ENCODE measurements at regions of chr14 and their contacts with region 1.

Region 1: DNA sequence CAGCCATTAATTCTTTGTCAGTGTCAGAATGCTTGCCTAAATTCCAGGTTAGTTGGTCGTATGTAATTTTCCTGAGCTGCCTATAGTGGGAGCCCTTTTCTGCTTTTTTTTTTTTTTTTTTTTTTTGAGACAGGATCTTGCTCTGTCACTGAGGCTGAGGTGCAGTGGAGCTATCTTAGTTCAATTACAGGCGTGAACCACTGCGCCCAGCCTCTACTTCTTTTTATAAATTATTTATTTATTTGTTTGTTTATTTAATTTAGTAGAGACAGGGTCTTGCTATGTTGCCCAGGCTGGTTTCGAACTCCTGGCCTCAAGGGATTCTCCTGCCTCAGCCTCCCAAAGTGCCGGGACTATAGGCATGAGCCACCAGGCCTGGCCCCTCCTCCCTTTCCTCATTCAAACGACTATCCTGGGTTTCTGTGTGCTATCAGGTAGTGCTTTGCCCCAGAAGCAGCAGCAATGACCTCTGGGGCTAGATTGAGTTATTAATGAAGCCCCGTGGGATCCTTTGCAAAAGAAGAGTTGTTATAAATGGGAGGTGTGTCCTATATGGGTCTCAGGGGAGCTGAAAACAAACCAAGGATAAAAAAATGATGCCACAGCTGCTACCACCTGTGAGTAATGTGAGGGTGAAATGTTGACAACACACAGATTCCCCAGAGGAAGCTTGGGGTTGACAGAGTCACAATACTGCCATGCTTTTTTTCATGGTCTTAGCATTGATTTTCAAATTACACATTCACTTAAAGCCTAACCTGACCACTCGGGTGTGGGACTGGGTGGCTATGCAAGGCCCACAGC is 34.6 kb upstream of the NFKBIA start:
- ATAC-seq: peak in 6 of 8 experiments; percentile 43 to 94 (median 71)
- H3K4me3 ChIP-seq: no peak overlapping the region
- H3K27ac ChIP-seq: no peak overlapping the region
- H3K4me1 ChIP-seq: no peaks in the 10 kb centered on the region

Region 2: DNA sequence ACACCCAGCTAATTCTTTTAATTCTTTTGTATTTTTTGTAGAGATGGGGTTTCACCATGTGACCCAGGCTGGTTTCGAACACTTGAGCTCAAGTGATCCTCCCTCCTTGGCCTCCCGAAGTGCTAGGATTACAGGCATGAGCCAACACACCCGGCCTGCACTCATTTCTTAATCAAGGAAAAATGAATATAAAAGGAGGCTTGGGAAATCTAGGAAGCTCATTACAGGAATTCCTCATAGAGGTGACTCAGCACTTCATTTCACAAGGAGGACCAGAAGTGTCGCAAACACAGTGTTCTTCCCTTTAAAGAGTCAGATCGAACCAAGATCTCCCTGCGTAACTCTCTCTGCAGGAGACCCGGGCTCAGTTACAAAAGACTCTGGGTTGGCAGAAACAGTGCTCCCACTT is 64.8 kb before region 1 on chr14:
- in situ Hi-C with region 1: no loop called
- ATAC-seq: peak in 4 of 8 experiments; percentile 33 to 75 (median 55)
- H3K4me3 ChIP-seq: no peak overlapping the region
- H3K27ac ChIP-seq: no peak overlapping the region
- H3K4me1 ChIP-seq: no peaks in the 10 kb centered on the region

Region 3: DNA sequence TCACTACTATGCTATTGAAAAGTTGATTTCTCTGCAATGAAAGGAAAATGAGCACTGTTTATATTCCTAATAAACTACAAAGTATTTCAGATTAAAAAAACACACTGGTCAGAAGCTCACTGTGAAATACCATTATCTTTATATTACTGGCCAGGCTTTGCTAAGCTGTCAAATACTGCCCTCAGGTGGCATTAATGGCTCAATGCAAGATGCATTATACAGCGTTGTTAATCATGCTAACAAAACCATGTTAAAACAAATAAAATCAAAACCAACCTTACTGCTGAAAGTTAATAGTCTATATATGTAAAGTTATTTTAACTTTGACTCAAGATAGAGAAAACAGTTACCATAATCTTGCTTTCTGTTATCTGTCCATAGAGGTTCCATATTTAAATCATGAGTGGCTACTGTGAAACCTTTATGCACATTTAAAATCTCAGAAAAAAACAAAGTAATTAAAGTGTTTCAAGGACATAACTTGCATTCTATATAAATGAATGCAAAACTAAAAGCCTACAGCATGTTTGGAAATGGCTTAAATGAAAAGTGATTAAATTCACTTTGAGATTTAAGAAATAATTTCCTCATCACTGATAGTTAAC is 248.3 kb after region 1 on chr14:
- in situ Hi-C with region 1: loop called in 1 of 9 experiments (anchors 25 kb)
- ATAC-seq: peak in 4 of 8 experiments; percentile 46 to 86 (median 76)
- H3K4me3 ChIP-seq: no peak overlapping the region
- H3K27ac ChIP-seq: no peak overlapping the region
- H3K4me1 ChIP-seq: no peaks in the 10 kb centered on the region

Region 4: DNA sequence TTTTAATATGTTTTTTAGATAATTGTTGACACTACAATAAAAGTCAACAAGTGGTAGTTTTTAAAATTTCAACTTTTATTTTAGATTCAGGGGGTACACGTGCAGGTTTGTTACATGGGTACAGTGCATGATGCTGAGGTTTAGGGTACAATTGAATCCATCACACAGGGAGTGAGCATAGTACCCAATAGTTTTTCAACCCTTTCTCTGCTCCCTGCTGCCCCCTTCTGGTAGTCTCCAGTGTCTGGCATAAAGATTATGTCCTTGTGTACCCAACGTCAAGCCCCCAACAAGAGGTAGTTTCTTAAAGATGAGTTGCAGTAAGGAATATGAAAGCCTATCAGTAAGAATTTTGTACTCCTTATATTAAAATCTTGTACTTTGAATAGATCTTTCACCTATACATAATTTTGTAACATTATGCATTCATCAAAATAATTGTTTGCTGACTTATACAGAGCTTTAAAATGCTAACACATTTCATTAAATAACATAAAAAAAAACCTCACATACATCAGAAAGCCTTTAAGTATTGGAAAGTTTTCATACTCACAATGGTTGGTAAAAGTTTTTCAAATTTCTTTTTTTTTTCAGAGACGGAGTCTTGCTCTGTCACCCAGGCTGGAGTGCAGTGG is 375.4 kb after region 1 on chr14:
- in situ Hi-C with region 1: loop called in 1 of 9 experiments (anchors 25 kb)
- ATAC-seq: peak in 3 of 8 experiments; percentile 75 to 83 (median 80)
- H3K4me3 ChIP-seq: no peak overlapping the region
- H3K27ac ChIP-seq: no peak overlapping the region
- H3K4me1 ChIP-seq: no peaks in the 10 kb centered on the region